ENCODE measurements at regions of chrX and their contacts with region 1.

Region 1: GRCh38 chrX:102768987-102769761 is 48.6 kb downstream of the GPRASP3 start:
- DNase-seq: peak; percentile 90
- ATAC-seq: peak; percentile 83
- H3K4me3 ChIP-seq: peak overlapping the region; percentile 45 to 79 (median 70)
- H3K4me3 Mint-ChIP-seq: peak overlapping the region; percentile 98
- H3K27ac ChIP-seq: peak overlapping the region; percentile 36 to 66
- H3K27ac Mint-ChIP-seq: peak overlapping the region; percentile 96
- H3K4me1 ChIP-seq: peaks cover 5 to 6% of the 10 kb centered on the region in 2 donors
- H3K4me1 Mint-ChIP-seq: peaks cover 16% of the 10 kb centered on the region
- H3K27me3 ChIP-seq: no peaks in the 10 kb centered on the region
- H3K27me3 Mint-ChIP-seq: no peaks in the 10 kb centered on the region
- CTCF ChIP-seq: no peak

Region 2: GRCh38 chrX:102345916-102346315 is 423.3 kb before region 1 on chrX:
- CTCF ChIA-PET with region 1: no interaction called
- POLR2A ChIA-PET with region 1: no interaction called
- intact Hi-C with region 1: no loop called
- DNase-seq: peak; percentile 50
- ATAC-seq: no peak
- H3K4me3 ChIP-seq: no peak overlapping the region
- H3K4me3 Mint-ChIP-seq: no peak overlapping the region
- H3K27ac ChIP-seq: no peak overlapping the region
- H3K27ac Mint-ChIP-seq: no peak overlapping the region
- H3K4me1 ChIP-seq: no peaks in the 10 kb centered on the region
- H3K4me1 Mint-ChIP-seq: no peaks in the 10 kb centered on the region
- H3K27me3 ChIP-seq: no peaks in the 10 kb centered on the region
- H3K27me3 Mint-ChIP-seq: no peaks in the 10 kb centered on the region
- CTCF ChIP-seq: peak; percentile 76

Region 3: DNA sequence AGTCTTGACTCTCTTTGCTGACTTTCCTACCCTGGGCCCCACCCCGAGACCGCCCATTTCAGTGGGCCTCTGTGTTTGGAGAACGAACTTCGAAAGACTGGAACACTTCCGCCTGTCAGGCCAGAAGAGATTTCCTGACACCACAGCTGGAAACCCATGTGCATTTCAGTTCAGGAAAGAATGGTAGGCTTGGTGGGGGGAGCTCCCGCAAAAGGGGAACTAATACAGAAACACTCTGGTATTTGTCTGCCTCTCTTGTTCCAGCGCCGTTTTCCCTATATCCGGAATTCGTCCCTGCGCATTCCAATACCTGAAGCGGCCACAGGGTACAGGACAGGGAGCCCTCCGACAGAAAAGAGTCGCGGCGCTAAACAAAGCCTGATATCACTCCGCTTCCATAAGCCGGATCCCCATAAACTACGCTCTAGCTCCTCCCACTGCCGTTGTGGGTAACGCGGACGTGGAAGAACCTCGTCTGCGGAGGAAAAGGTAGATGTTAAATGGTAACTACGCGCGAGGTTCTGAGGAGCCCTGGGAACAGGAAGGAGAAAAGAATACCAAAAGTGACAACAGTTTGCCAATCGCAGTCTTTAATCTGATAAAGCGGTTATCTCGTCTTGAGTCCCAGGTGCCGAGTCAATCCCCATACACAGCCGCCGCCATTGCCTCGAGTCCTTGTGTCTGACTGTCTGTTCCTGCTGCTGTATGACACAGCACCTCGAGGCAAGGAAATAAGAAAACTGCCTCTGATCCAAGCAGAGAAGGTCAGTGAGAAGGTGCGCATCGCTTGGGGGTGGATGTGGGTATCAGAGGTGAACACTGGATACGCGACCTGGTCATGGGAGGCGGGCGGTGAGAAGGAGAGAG is 169.9 kb before region 1 on chrX and contains the start of gene ARMCX5:
- CTCF ChIA-PET with region 1: no interaction called
- POLR2A ChIA-PET with region 1: no interaction called
- intact Hi-C with region 1: loop called (anchors 5 kb)
- DNase-seq: peak; percentile 79
- ATAC-seq: peak; percentile 85
- H3K4me3 ChIP-seq: peak within 1 kb of the TSS; percentile 64 to 70 (median 69)
- H3K4me3 Mint-ChIP-seq: peak within 1 kb of the TSS; percentile 100
- H3K27ac ChIP-seq: peak within 1 kb of the TSS; percentile 53 to 70
- H3K27ac Mint-ChIP-seq: peak within 1 kb of the TSS; percentile 98
- H3K4me1 ChIP-seq: peaks cover 12 to 14% of the 10 kb centered on the region in 2 donors
- H3K4me1 Mint-ChIP-seq: peaks cover 34% of the 10 kb centered on the region
- H3K27me3 ChIP-seq: no peaks in the 10 kb centered on the region
- H3K27me3 Mint-ChIP-seq: no peaks in the 10 kb centered on the region
- CTCF ChIP-seq: no peak
- total RNA-seq, gene ARMCX5: 12.4 and 12.5 TPM in 2 replicates

Region 4: DNA sequence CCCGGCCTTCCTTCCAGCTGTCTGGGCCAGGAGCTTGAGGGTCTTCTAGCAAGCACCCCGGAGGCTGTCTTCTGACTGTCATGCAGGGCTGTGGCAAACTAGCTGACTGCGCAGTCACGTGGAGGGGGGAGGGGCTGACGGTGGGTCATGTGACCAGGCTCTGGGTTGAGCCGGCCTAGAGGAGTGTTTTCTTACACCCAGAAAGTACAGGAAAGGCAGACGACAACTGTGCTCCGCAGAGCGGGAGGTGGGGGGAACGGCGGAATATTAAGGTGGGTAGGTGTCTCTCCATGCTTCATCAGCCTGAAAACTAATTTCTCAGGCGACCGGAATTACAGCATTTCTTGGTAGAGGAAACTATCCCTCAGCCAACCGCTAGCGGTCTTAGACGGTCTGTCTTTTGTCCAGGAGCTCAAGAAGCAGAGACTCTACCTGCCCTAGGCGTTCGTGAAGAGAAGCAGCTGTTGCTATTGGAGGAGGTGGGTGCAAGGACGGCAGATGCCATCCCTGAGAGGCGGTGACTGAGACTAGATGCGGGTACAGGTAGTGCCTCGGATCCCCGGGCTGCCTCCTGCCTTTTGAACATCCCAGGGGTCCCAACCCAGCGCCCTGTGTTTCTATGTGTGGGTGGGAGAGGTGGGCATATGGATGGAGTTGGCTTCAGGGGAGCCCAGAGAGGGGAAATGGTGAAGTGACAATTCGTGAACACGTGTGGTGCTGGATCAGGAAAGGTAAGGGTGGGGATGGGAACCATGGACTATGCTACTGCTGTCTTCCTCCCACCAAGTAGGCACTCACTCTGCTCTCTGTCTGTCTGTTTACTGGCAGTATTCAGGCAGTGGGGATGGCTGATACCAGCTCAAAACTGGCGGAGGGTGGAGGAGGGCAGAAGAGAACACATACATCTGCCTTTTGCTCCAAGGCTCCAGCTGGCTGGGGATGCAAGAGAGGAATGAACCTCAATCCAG is 109.1 kb before region 1 on chrX:
- CTCF ChIA-PET with region 1: no interaction called
- POLR2A ChIA-PET with region 1: no interaction called
- intact Hi-C with region 1: loop called (anchors 5 kb)
- DNase-seq: peak; percentile 83
- ATAC-seq: peak; percentile 89
- H3K4me3 ChIP-seq: peak overlapping the region; percentile 48 to 73 (median 65)
- H3K4me3 Mint-ChIP-seq: peak overlapping the region; percentile 94
- H3K27ac ChIP-seq: peak overlapping the region; percentile 47 to 78
- H3K27ac Mint-ChIP-seq: peak overlapping the region; percentile 93
- H3K4me1 ChIP-seq: peaks cover 0 to 5% of the 10 kb centered on the region in 2 donors
- H3K4me1 Mint-ChIP-seq: peaks cover 18% of the 10 kb centered on the region
- H3K27me3 ChIP-seq: no peaks in the 10 kb centered on the region
- H3K27me3 Mint-ChIP-seq: no peaks in the 10 kb centered on the region
- CTCF ChIP-seq: peak; percentile 26

Region 5: GRCh38 chrX:102720237-102721168 is 48.7 kb before region 1 on chrX and contains the start of gene GPRASP3:
- CTCF ChIA-PET with region 1: no interaction called
- POLR2A ChIA-PET with region 1: no interaction called
- intact Hi-C with region 1: loop called (anchors 1 kb)
- DNase-seq: peak; percentile 62
- ATAC-seq: peak; percentile 87
- H3K4me3 ChIP-seq: peak within 1 kb of the TSS; percentile 36 to 48 (median 42)
- H3K4me3 Mint-ChIP-seq: peak within 1 kb of the TSS; percentile 87
- H3K27ac ChIP-seq: no peak within 1 kb of the TSS
- H3K27ac Mint-ChIP-seq: peak within 1 kb of the TSS; percentile 56
- H3K4me1 ChIP-seq: peaks cover 0 to 10% of the 10 kb centered on the region in 2 donors
- H3K4me1 Mint-ChIP-seq: peaks cover 10% of the 10 kb centered on the region
- H3K27me3 ChIP-seq: no peaks in the 10 kb centered on the region
- H3K27me3 Mint-ChIP-seq: no peaks in the 10 kb centered on the region
- CTCF ChIP-seq: no peak
- total RNA-seq, gene GPRASP3: 0.89 and 1.9 TPM in 2 replicates

Region 6: GRCh38 chrX:103533511-103534216 is 764.5 kb after region 1 on chrX:
- CTCF ChIA-PET with region 1: no interaction called
- POLR2A ChIA-PET with region 1: no interaction called
- intact Hi-C with region 1: no loop called
- DNase-seq: peak; percentile 70
- ATAC-seq: peak; percentile 74
- H3K4me3 ChIP-seq: peak overlapping the region in 1 of 5 experiments; percentile 28
- H3K4me3 Mint-ChIP-seq: peak overlapping the region; percentile 76
- H3K27ac ChIP-seq: no peak overlapping the region
- H3K27ac Mint-ChIP-seq: peak overlapping the region; percentile 26
- H3K4me1 ChIP-seq: peaks cover 3 to 4% of the 10 kb centered on the region in 2 donors
- H3K4me1 Mint-ChIP-seq: peaks cover 4% of the 10 kb centered on the region
- H3K27me3 ChIP-seq: peaks cover 0 to 3% (median 0%) of the 10 kb centered on the region in 4 experiments
- H3K27me3 Mint-ChIP-seq: no peaks in the 10 kb centered on the region
- CTCF ChIP-seq: peak; percentile 73